ENCODE measurements at regions of chr2 and their contacts with region 1.

Region 1: DNA sequence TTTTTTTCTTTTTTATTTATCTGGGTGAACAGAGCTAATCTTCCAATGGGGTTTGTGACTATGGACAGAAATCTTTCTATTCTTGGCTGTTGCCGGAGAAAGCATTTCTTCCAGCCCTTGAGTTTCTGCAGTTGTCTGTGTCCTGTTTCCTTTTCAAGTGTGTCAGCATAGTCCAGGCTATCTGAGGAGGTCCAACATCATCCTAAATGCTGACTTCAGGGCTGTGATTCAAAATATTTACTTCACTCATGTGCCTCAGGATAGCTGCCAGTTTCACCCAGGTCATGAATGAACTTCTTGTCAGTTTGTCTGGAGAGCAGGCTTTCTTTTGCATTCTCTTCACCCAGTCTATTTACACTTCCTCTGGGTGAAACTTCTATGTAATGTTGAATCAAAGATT is 27.9 kb downstream of the ITGAV start:
- DNase-seq: no peak
- ATAC-seq: no peak
- H3K4me3 ChIP-seq: no peak overlapping the region
- H3K27ac ChIP-seq: no peak overlapping the region
- H3K4me1 ChIP-seq: no peaks in the 10 kb centered on the region
- H3K27me3 ChIP-seq: no peaks in the 10 kb centered on the region
- CTCF ChIP-seq: no peak

Region 2: DNA sequence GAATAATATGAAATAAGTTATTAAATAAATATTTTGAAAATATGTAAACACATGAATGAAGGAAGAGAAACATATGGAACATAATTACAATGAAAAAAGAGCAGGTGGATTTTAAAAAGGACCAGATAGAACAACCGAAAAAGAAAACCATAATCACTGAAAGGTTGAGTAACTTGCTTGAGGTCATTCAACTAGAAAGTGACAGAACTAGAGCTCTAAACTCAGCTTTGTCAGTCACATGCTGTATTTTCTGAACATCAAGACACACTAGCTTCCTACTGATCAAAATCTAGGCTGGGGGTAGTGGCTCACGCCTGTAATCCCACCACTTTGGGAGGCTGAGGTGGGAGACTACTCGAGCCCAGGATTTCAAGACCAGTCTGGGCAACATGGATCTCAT is 57.9 kb before region 1 on chr2:
- CTCF ChIA-PET with region 1: no interaction called
- POLR2A ChIA-PET with region 1: no interaction called
- intact Hi-C with region 1: loop called (anchors 2 kb)
- DNase-seq: no peak
- ATAC-seq: no peak
- H3K4me3 ChIP-seq: no peak overlapping the region
- H3K27ac ChIP-seq: no peak overlapping the region
- H3K4me1 ChIP-seq: peaks cover 10% of the 10 kb centered on the region; the same call in 1 of the 2 replicates
- H3K27me3 ChIP-seq: no peaks in the 10 kb centered on the region
- CTCF ChIP-seq: no peak